Panc1 (cell line): ENCODE measurements at regions of chr9 and their contacts with region 1.

Region 1: DNA sequence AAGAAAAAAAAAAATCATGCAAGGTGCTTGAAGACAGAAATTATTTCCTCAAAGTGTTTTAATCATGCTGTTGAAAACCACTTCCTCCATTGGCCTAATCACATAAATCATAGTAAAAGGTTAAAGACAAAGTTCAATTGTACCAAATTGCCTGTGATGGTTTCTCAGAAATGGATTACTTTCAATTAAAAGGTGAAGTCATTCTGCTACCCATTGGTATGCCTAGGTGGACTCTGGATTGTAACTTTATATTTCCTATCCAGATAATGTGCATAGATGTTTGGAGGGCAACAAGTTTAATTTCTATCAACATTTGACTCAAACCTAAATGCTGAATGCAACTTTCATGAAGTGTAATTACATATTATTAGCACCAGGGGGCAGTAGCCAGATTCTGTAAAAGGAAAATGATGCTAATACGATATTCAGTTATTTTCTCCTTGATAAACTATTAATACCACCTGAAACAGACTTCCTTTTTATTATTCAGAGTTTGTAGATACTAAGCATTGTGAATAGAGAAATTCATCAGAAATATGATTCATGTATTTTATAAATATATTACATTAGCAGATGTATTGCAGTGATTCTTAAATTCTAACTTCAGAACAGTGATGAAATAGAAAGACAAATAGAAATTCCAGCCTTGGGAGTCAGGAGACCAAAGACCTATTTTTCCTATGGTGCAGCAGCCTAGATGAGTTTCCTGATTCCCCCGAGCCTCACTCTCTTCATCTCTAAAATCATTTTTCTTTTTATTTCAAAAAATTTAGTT is 148.2 kb downstream of the CAAP1 start:
- DNase-seq: no peak
- ATAC-seq: no peak
- H3K4me3 ChIP-seq: no peak overlapping the region
- H3K27ac ChIP-seq: no peak overlapping the region
- H3K4me1 ChIP-seq: no peaks in the 10 kb centered on the region
- H3K27me3 ChIP-seq: no peaks in the 10 kb centered on the region
- CTCF ChIP-seq: peak; percentile 32; the same call in 1 of the 2 replicates

Region 2: DNA sequence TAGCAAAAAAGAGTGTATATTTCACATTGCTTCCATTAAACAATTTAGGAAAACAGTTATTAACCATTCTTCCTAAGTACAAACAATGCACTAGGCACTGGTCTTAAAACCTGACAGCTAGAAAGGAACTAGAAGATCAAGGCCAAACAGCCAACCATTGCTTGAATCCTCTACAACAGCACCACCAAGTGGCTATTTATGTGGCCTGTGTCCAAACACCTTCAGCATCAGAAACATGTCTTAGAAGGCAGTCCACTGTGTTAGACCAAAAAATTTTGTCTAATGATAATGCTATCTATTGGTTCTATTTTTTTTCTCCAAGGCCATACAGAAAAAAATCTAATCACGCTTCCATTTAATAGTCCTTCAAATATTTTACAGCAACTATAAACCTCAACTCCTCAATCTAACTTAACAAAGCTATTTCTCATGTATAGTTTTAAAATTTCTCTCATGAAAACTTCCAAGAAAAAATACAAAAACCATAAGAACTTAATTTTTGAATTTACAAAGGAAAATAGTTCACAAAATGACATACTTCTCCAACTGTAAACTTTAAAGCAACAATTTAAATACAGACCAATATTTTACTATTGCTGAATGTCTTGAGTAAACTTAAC is 112.1 kb after region 1 on chr9:
- CTCF ChIA-PET with region 1: no interaction called
- POLR2A ChIA-PET with region 1: no interaction called
- in situ Hi-C with region 1: no loop called
- intact Hi-C with region 1: loop called (anchors 10 kb)
- DNase-seq: peak; percentile 30
- ATAC-seq: no peak
- H3K4me3 ChIP-seq: no peak overlapping the region
- H3K27ac ChIP-seq: no peak overlapping the region
- H3K4me1 ChIP-seq: no peaks in the 10 kb centered on the region
- H3K27me3 ChIP-seq: no peaks in the 10 kb centered on the region
- CTCF ChIP-seq: peak; percentile 39; the same call in 1 of the 2 replicates

Region 3: DNA sequence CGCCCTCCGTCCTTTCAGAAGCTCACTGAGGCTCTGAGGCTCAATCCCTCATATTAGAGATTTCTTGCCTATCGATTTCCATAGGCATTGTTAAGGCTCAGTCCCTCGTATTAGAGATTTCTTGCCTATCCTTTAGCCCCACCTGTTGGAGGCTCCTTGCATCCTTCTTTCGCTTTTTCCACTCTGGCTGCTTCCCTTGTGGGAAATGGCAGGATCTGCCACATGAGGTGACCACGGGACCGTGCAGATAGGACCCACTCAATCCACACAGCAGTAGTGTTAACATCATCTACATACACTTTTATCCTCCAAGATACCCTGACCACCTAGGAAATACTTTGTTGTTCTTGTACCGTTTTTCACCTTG is 231.3 kb after region 1 on chr9:
- CTCF ChIA-PET with region 1: no interaction called
- POLR2A ChIA-PET with region 1: no interaction called
- in situ Hi-C with region 1: no loop called
- intact Hi-C with region 1: loop called (anchors 10 kb)
- DNase-seq: no peak
- ATAC-seq: peak; percentile 60; the same call in 1 of the 2 replicates
- H3K4me3 ChIP-seq: no peak overlapping the region
- H3K27ac ChIP-seq: no peak overlapping the region
- H3K4me1 ChIP-seq: no peaks in the 10 kb centered on the region
- H3K27me3 ChIP-seq: no peaks in the 10 kb centered on the region
- CTCF ChIP-seq: peak; percentile 60